IMR-90 (cell line): ENCODE measurements at regions of chr20 and their contacts with region 1.

Region 1: GRCh38 chr20:43736588-43737158 is 9.9 kb upstream of the GTSF1L start:
- DNase-seq: peak; percentile 10
- ATAC-seq: no peak
- H3K4me3 ChIP-seq: no peak overlapping the region
- H3K27ac ChIP-seq: no peak overlapping the region
- H3K4me1 ChIP-seq: peaks cover 3% of the 10 kb centered on the region; the same call in 1 of the 2 replicates
- H3K27me3 ChIP-seq: peaks cover 10% of the 10 kb centered on the region
- CTCF ChIP-seq: no peak
- POLR2A ChIP-seq: no peak
- RAD21 ChIP-seq: no peak

Region 2: DNA sequence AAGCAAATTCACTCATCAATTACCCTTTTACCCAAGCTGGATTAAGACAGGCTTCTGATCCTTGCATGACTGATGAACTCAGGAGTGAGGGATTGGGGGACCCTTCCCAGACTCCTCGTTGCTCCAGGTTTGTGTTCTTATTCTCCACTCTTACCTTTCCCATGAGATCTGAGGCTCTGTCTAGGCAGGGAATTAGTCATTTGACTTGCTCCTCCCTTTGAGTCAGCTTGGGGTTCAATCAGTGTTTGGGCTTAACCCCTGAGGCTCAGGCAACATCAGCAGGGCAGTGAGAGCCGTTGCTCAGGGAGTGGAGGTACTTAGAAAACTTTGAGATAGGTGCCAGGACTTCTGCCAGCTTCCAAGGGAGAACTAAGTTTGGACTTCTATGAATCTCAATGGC is 157.3 kb after region 1 on chr20:
- CTCF ChIA-PET with region 1: interaction called, 3 read pairs
- POLR2A ChIA-PET with region 1: interaction called, 11 read pairs
- dilution Hi-C with region 1: no loop called
- in situ Hi-C with region 1: no loop called
- intact Hi-C with region 1: no loop called
- DNase-seq: peak; percentile 24
- ATAC-seq: peak; percentile 57
- H3K4me3 ChIP-seq: no peak overlapping the region
- H3K27ac ChIP-seq: no peak overlapping the region
- H3K4me1 ChIP-seq: peaks cover 5% of the 10 kb centered on the region; the same call in 1 of the 2 replicates
- H3K27me3 ChIP-seq: no peaks in the 10 kb centered on the region
- CTCF ChIP-seq: no peak
- POLR2A ChIP-seq: no peak
- RAD21 ChIP-seq: no peak